OCI-LY7 (cell line): ENCODE measurements at regions of chr14 and their contacts with region 1.

Region 1: GRCh38 chr14:49959822-49960408 is 67.0 kb downstream of the ARF6 start:
- DNase-seq: peak; percentile 96
- H3K4me3 ChIP-seq: peak overlapping the region; percentile 54
- H3K27ac ChIP-seq: peak overlapping the region; percentile 95
- H3K4me1 ChIP-seq: peaks cover 81% of the 10 kb centered on the region
- CTCF ChIP-seq: no peak

Region 2: GRCh38 chr14:49862089-49862673 is 97.7 kb before region 1 on chr14:
- CTCF ChIA-PET with region 1: no interaction called
- POLR2A ChIA-PET with region 1: interaction called, 6 read pairs
- intact Hi-C with region 1: loop called (anchors 2 kb)
- DNase-seq: peak; percentile 89
- H3K4me3 ChIP-seq: peak overlapping the region; percentile 75
- H3K27ac ChIP-seq: peak overlapping the region; percentile 83
- H3K4me1 ChIP-seq: peaks cover 52% of the 10 kb centered on the region
- CTCF ChIP-seq: peak; percentile 100

Region 3: GRCh38 chr14:49930720-49931119 is 29.2 kb before region 1 on chr14:
- CTCF ChIA-PET with region 1: no interaction called
- POLR2A ChIA-PET with region 1: interaction called, 3 read pairs
- intact Hi-C with region 1: loop called (anchors 2 kb)
- DNase-seq: peak; percentile 68
- H3K4me3 ChIP-seq: no peak overlapping the region
- H3K27ac ChIP-seq: peak overlapping the region; percentile 79
- H3K4me1 ChIP-seq: peaks cover 38% of the 10 kb centered on the region
- CTCF ChIP-seq: no peak

Region 4: GRCh38 chr14:49946320-49947141 is 13.4 kb before region 1 on chr14:
- CTCF ChIA-PET with region 1: no interaction called
- POLR2A ChIA-PET with region 1: interaction called, 27 read pairs
- intact Hi-C with region 1: no loop called
- DNase-seq: peak; percentile 30
- H3K4me3 ChIP-seq: no peak overlapping the region
- H3K27ac ChIP-seq: no peak overlapping the region
- H3K4me1 ChIP-seq: peaks cover 37% of the 10 kb centered on the region
- CTCF ChIP-seq: no peak

Region 5: GRCh38 chr14:49977126-49977841 is 17.4 kb after region 1 on chr14:
- CTCF ChIA-PET with region 1: interaction called, 8 read pairs
- POLR2A ChIA-PET with region 1: interaction called, 78 read pairs
- intact Hi-C with region 1: loop called (anchors 2 kb)
- DNase-seq: peak; percentile 91
- H3K4me3 ChIP-seq: peak overlapping the region; percentile 64
- H3K27ac ChIP-seq: peak overlapping the region; percentile 93
- H3K4me1 ChIP-seq: peaks cover 82% of the 10 kb centered on the region
- CTCF ChIP-seq: no peak

Region 6: GRCh38 chr14:50099335-50099734 is 139.4 kb after region 1 on chr14:
- CTCF ChIA-PET with region 1: no interaction called
- POLR2A ChIA-PET with region 1: no interaction called
- intact Hi-C with region 1: no loop called
- DNase-seq: no peak
- H3K4me3 ChIP-seq: no peak overlapping the region
- H3K27ac ChIP-seq: no peak overlapping the region
- H3K4me1 ChIP-seq: peaks cover 7% of the 10 kb centered on the region
- CTCF ChIP-seq: no peak